Dorsolateral prefrontal cortex (tissue), 120 donors: ENCODE measurements at regions of chr4 and their contacts with region 1.

Region 1: GRCh38 chr4:164731827-164732474 is 22.0 kb upstream of the SMIM31 start:
- DNase-seq: peak in 9 of 10 donors; percentile 12 to 72 (median 54)
- H3K4me3 ChIP-seq: peak overlapping the region in 1 of 59 donors; percentile 3
- H3K27ac ChIP-seq: no peak overlapping the region
- H3K27me3 ChIP-seq: no peaks in the 10 kb centered on the region
- CTCF ChIP-seq: peak; percentile 75 to 97 (median 92)

Region 2: DNA sequence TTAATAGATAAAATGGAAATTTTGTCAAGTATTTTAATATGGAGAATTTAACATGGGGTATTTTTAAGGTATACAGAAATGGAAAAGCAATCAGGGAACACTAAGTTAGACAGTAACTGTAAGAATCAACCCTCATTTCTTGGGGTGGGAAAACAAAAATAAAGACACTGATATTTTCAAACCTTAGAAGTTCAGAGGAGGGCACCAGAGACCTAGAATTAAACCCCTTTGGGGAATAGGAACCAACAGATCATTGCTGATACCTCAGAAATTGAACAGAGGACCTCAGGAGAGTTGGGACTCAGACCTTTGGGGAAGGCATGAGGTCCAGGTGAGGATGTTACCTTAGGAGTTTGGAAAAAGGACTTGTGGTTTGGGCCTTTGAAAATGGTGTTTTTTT is 801.9 kb before region 1 on chr4:
- intact Hi-C with region 1: loop called in 1 of 2 experiments (anchors 5 kb)
- DNase-seq: no peak
- H3K4me3 ChIP-seq: no peak overlapping the region
- H3K27ac ChIP-seq: no peak overlapping the region
- H3K27me3 ChIP-seq: no peaks in the 10 kb centered on the region
- CTCF ChIP-seq: peak in 26 of 56 donors; percentile 7 to 51 (median 25)

Region 3: GRCh38 chr4:164779811-164780216 is 47.9 kb after region 1 on chr4:
- intact Hi-C with region 1: no loop called
- DNase-seq: peak in 1 of 10 donors; percentile 43
- H3K4me3 ChIP-seq: no peak overlapping the region
- H3K27ac ChIP-seq: no peak overlapping the region
- H3K27me3 ChIP-seq: no peaks in the 10 kb centered on the region
- CTCF ChIP-seq: peak; percentile 44 to 86 (median 74)

Region 4: GRCh38 chr4:165569031-165569430 is 837.1 kb after region 1 on chr4:
- intact Hi-C with region 1: no loop called
- DNase-seq: no peak
- H3K4me3 ChIP-seq: no peak overlapping the region
- H3K27ac ChIP-seq: no peak overlapping the region
- H3K27me3 ChIP-seq: peaks cover 0 to 13% (median 0%) of the 10 kb centered on the region in 45 donors
- CTCF ChIP-seq: no peak